ENCODE measurements at regions of chr10 and their contacts with region 1.

Region 1: DNA sequence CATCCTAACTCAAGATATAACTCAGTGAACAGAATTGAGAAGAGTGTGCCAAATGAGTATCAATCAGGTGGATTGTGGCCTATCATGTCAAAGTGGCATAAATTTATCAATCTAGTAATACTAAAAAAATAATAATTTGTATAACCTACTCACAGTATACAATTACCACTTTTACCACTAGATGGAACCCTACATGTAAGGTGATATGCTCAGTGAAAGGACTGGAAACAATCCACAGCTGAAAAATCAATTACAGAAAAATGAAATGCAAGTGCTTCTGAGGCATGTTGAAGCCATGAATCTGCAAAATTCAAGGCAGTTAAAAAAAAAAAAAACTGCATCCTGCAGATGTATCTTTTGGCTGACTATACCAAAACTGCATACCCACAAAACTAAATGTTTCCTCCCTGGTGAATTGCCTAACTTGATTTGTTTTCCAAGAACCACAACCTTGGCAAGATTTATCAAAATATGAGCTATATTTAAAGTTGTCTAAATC is 13.9 kb downstream of the ARHGAP19 start:
- DNase-seq: no peak
- ATAC-seq: peak; percentile 92
- H3K4me3 ChIP-seq: no peak overlapping the region
- H3K27ac ChIP-seq: no peak overlapping the region
- H3K4me1 ChIP-seq: peaks cover 9% of the 10 kb centered on the region
- H3K27me3 ChIP-seq: no peaks in the 10 kb centered on the region
- CTCF ChIP-seq: peak; percentile 46 to 58 (median 51); a peak in 5 of 6 replicates
- EP300 ChIP-seq: no peak
- POLR2A ChIP-seq: no peak
- RAD21 ChIP-seq: peak; percentile 49

Region 2: DNA sequence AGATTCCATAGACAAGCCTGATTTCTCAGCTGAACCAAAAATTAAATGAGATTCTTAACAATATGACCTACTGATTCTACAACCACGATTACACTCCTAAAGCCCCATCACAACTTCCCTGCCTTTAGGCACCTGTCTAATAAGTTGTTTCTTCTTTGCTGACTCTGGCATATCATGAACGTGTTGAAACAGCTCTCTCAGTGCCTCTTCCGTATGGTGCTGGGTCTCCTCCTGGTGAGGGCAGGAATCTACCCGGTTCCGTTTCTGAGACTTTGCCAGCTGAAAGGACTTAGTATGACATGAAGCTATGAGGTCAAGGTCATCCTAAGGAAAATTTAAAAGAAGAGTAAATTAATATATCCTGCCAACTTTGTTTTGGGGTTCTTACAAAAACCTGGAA is 34.7 kb before region 1 on chr10:
- CTCF ChIA-PET with region 1: interaction called, 10 read pairs
- POLR2A ChIA-PET with region 1: no interaction called
- RAD21 ChIA-PET with region 1: no interaction called
- SMC1A ChIA-PET with region 1: interaction called, 3 read pairs
- in situ Hi-C with region 1: no loop called
- intact Hi-C with region 1: no loop called
- DNase-seq: no peak
- ATAC-seq: no peak
- H3K4me3 ChIP-seq: no peak overlapping the region
- H3K27ac ChIP-seq: no peak overlapping the region
- H3K4me1 ChIP-seq: no peaks in the 10 kb centered on the region
- H3K27me3 ChIP-seq: no peaks in the 10 kb centered on the region
- CTCF ChIP-seq: no peak
- EP300 ChIP-seq: no peak
- POLR2A ChIP-seq: no peak
- RAD21 ChIP-seq: no peak

Region 3: GRCh38 chr10:97292097-97292862 is 13.7 kb after region 1 on chr10 and contains the start of gene ARHGAP19:
- CTCF ChIA-PET with region 1: interaction called, 22 read pairs
- POLR2A ChIA-PET with region 1: interaction called, 3 read pairs
- RAD21 ChIA-PET with region 1: no interaction called
- SMC1A ChIA-PET with region 1: interaction called, 7 read pairs
- in situ Hi-C with region 1: no loop called
- intact Hi-C with region 1: no loop called
- DNase-seq: peak; percentile 95
- ATAC-seq: peak; percentile 98
- H3K4me3 ChIP-seq: peak within 1 kb of the TSS; percentile 90
- H3K27ac ChIP-seq: peak within 1 kb of the TSS; percentile 60
- H3K4me1 ChIP-seq: no peaks in the 10 kb centered on the region; the same call in 1 of the 2 replicates
- H3K27me3 ChIP-seq: no peaks in the 10 kb centered on the region
- CTCF ChIP-seq: 0 out of 6 replicates have a peak, but pooled peaks of 1 of the 3 experiments have one; percentile 6
- EP300 ChIP-seq: no peak
- POLR2A ChIP-seq: peak; percentile 86
- RAD21 ChIP-seq: no peak
- polyA plus RNA-seq, gene ARHGAP19: 13.3 to 16.1 TPM

Region 4: GRCh38 chr10:97327348-97328294 is 49.1 kb after region 1 on chr10:
- CTCF ChIA-PET with region 1: interaction called, 29 read pairs
- POLR2A ChIA-PET with region 1: no interaction called
- RAD21 ChIA-PET with region 1: interaction called, 14 read pairs
- SMC1A ChIA-PET with region 1: interaction called, 17 read pairs
- in situ Hi-C with region 1: no loop called
- intact Hi-C with region 1: no loop called
- DNase-seq: no peak
- ATAC-seq: peak; percentile 40
- H3K4me3 ChIP-seq: no peak overlapping the region
- H3K27ac ChIP-seq: no peak overlapping the region
- H3K4me1 ChIP-seq: peaks cover 12% of the 10 kb centered on the region
- H3K27me3 ChIP-seq: no peaks in the 10 kb centered on the region
- CTCF ChIP-seq: no peak
- EP300 ChIP-seq: no peak
- POLR2A ChIP-seq: no peak
- RAD21 ChIP-seq: no peak

Region 5: DNA sequence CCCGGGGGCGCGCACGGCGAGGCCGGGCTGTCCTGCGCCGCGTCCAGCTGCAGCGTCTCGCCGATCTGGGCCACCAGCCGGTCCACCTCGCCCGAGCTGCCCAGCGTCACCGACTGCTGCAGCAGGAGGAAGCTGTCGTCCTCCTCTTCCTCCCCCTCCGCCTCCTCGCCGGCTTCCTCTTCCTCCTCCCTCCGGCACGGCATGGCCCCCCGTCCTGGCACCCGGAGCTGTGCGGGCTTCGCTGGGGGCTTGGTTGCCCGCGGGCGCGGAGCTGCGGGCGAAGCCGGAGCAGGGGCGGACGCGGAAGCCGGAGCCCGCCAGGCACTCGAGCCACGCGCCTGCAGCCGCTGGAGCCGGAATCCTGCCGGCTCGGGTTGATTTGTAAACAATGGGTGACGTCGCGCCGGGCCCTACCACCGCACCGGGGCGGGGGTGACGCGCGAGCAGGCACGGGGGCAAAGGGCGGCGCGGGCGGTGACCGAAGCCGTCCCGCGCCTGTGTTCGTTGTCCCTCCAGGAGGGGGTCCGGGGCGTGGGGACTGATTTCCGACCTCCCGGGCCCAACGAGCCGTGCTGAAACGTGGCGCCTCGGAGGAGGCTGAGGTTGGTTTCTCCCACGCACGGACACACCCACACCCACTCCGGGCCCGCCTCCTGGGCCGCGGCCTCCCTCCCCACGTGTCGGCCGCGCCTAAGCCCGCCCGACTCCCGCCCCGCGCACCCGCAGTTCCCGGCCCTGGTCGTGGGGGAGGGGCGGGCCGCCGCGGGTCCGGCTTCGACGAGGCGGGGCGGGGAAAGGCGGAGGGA is 56.0 kb after region 1 on chr10 and contains the start of gene FRAT2:
- CTCF ChIA-PET with region 1: interaction called, 29 read pairs
- POLR2A ChIA-PET with region 1: interaction called, 3 read pairs
- RAD21 ChIA-PET with region 1: interaction called, 14 read pairs
- SMC1A ChIA-PET with region 1: interaction called, 17 read pairs
- in situ Hi-C with region 1: no loop called
- intact Hi-C with region 1: no loop called
- DNase-seq: peak; percentile 47
- ATAC-seq: peak; percentile 93
- H3K4me3 ChIP-seq: peak within 1 kb of the TSS; percentile 89
- H3K27ac ChIP-seq: peak within 1 kb of the TSS; percentile 83
- H3K4me1 ChIP-seq: no peaks in the 10 kb centered on the region
- H3K27me3 ChIP-seq: peaks cover 0 to 9% of the 10 kb centered on the region in 2 experiments; a peak in 1 of 4 replicates
- CTCF ChIP-seq: no peak
- EP300 ChIP-seq: no peak
- POLR2A ChIP-seq: peak; percentile 76
- RAD21 ChIP-seq: no peak
- polyA plus RNA-seq, gene FRAT2: 0.69 to 1.8 TPM

Region 6: GRCh38 chr10:97355571-97355975 is 77.0 kb after region 1 on chr10:
- CTCF ChIA-PET with region 1: interaction called, 26 read pairs
- POLR2A ChIA-PET with region 1: no interaction called
- RAD21 ChIA-PET with region 1: interaction called, 4 read pairs
- SMC1A ChIA-PET with region 1: interaction called, 3 read pairs
- in situ Hi-C with region 1: no loop called
- intact Hi-C with region 1: no loop called
- DNase-seq: no peak
- ATAC-seq: no peak
- H3K4me3 ChIP-seq: no peak overlapping the region
- H3K27ac ChIP-seq: no peak overlapping the region
- H3K4me1 ChIP-seq: no peaks in the 10 kb centered on the region
- H3K27me3 ChIP-seq: no peaks in the 10 kb centered on the region
- CTCF ChIP-seq: peak in 1 of 3 experiments; percentile 37; a peak in 1 of 6 replicates
- EP300 ChIP-seq: no peak
- POLR2A ChIP-seq: no peak
- RAD21 ChIP-seq: peak; percentile 34

Region 7: GRCh38 chr10:97400665-97401454 is 122.3 kb after region 1 on chr10 and contains the start of gene RRP12:
- CTCF ChIA-PET with region 1: interaction called, 7 read pairs
- POLR2A ChIA-PET with region 1: no interaction called
- RAD21 ChIA-PET with region 1: interaction called, 10 read pairs
- SMC1A ChIA-PET with region 1: no interaction called
- in situ Hi-C with region 1: no loop called
- intact Hi-C with region 1: no loop called
- DNase-seq: peak; percentile 93
- ATAC-seq: peak; percentile 96
- H3K4me3 ChIP-seq: peak within 1 kb of the TSS; percentile 72
- H3K27ac ChIP-seq: peak within 1 kb of the TSS; percentile 34; the same call in 1 of the 2 replicates
- H3K4me1 ChIP-seq: no peaks in the 10 kb centered on the region
- H3K27me3 ChIP-seq: no peaks in the 10 kb centered on the region
- CTCF ChIP-seq: 0 out of 6 replicates have a peak, but pooled peaks of 1 of the 3 experiments have one; percentile 16
- EP300 ChIP-seq: no peak
- POLR2A ChIP-seq: peak; percentile 77
- RAD21 ChIP-seq: no peak
- polyA plus RNA-seq, gene RRP12: 5.3 to 5.7 TPM

Measured in GM12878 (cell line).